Activated naive CD4-positive, alpha-beta T cell treated with anti-CD3 and anti-CD28 coated beads, Interleukin-2, amount 10 ng/mL, durations not matched to agents 7 days and 5 days (primary cell): ENCODE measurements at regions of chr14 and their contacts with region 1.

Region 1: GRCh38 chr14:65287264-65288131 is 125.0 kb upstream of the FUT8 start:
- DNase-seq: peak; percentile 65
- H3K4me3 Mint-ChIP-seq: peak overlapping the region; percentile 73
- H3K27ac Mint-ChIP-seq: peak overlapping the region; percentile 96
- H3K4me1 Mint-ChIP-seq: peaks cover 85% of the 10 kb centered on the region
- H3K27me3 Mint-ChIP-seq: no peaks in the 10 kb centered on the region

Region 2: DNA sequence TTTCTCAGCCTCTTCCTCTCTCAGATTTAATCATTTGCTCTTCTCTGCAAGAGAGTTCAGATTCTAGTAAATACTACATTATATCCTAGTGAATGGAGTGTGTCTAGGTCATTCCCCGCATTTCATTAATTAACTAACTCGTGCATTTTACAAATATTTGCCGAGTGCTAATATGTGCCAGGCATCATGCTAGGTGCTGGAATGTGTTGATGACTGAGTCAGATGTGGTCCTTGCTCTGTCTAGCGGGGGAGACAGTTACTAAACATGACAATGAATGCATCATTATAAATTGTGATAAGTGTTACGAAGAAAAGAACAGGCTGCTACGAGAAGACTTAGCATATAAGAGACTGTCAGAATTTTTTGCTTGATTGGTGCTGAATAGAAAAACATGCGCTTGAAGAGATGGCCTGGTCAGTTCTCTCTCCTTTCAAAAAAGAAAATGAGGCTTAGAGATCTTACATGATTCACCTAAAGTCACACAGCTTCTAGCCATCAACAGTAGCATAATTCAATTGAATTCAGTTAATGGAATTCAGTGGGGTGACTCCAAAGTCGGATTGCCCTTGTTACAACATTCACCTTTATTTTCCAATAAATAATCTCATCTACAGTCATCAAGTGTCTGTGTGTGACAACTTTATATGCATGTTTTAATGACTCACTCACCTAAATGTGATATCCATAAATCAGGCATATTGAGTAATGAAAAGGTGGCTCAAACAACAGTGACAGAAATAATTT is 136.4 kb before region 1 on chr14:
- CTCF ChIA-PET with region 1: no interaction called
- DNase-seq: no peak
- H3K4me3 Mint-ChIP-seq: no peak overlapping the region
- H3K27ac Mint-ChIP-seq: no peak overlapping the region
- H3K4me1 Mint-ChIP-seq: no peaks in the 10 kb centered on the region
- H3K27me3 Mint-ChIP-seq: peaks cover 12% of the 10 kb centered on the region

Region 3: GRCh38 chr14:65336191-65336591 is 48.7 kb after region 1 on chr14:
- CTCF ChIA-PET with region 1: interaction called, 12 read pairs
- DNase-seq: peak; percentile 66
- H3K4me3 Mint-ChIP-seq: peak overlapping the region; percentile 58
- H3K27ac Mint-ChIP-seq: peak overlapping the region; percentile 86
- H3K4me1 Mint-ChIP-seq: peaks cover 71% of the 10 kb centered on the region
- H3K27me3 Mint-ChIP-seq: no peaks in the 10 kb centered on the region

Region 4: GRCh38 chr14:65359503-65359902 is 72.0 kb after region 1 on chr14:
- CTCF ChIA-PET with region 1: interaction called, 14 read pairs
- DNase-seq: no peak
- H3K4me3 Mint-ChIP-seq: no peak overlapping the region
- H3K27ac Mint-ChIP-seq: no peak overlapping the region
- H3K4me1 Mint-ChIP-seq: peaks cover 41% of the 10 kb centered on the region
- H3K27me3 Mint-ChIP-seq: no peaks in the 10 kb centered on the region

Region 5: GRCh38 chr14:65377590-65377989 is 90.1 kb after region 1 on chr14:
- CTCF ChIA-PET with region 1: no interaction called
- DNase-seq: no peak
- H3K4me3 Mint-ChIP-seq: no peak overlapping the region
- H3K27ac Mint-ChIP-seq: no peak overlapping the region
- H3K4me1 Mint-ChIP-seq: peaks cover 24% of the 10 kb centered on the region
- H3K27me3 Mint-ChIP-seq: no peaks in the 10 kb centered on the region